HepG2 (cell line): ENCODE measurements at regions of chr16 and their contacts with region 1.

Region 1: DNA sequence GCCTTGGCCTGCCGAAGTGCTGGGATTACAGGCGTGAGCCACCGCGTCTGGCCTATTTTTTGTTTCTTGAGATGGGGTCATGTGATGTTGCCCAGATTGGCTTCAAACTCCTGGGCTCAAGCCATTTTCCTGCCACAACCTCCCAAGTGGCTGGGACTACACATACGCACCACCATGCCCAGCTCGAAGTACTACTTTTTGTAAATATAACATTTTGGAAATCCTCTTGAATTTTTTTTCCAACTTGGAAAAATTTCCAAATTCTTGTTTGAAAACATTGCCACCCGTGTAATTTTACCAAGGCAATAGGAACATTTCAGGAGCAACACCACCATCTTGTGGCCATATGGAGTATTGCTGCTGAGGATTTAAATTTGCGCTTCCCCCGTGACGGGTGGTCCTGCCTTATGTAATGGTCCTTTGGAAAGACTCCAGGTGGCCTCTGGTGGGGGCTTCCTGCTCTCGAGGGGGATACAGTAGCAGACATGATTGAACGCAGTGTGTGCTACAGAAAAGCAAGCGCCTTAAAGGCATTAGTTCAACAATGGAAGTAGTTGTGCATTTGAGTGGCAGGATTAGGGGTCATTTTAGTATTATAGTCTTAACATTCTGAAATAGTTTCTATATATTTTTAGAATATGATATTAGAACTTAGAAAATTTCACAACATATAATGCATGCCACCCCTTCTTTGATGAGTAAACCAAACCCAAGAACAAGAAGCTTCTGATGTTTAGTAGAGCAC is 8.0 kb downstream of the FLYWCH1 start:
- DNase-seq: peak; percentile 55
- ATAC-seq: no peak
- H3K4me3 ChIP-seq: no peak overlapping the region
- H3K27ac ChIP-seq: no peak overlapping the region
- H3K4me1 ChIP-seq: no peaks in the 10 kb centered on the region
- H3K27me3 ChIP-seq: no peaks in the 10 kb centered on the region
- CTCF ChIP-seq: peak; percentile 79
- EP300 ChIP-seq: no peak
- POLR2A ChIP-seq: no peak
- RAD21 ChIP-seq: peak; percentile 78

Region 2: DNA sequence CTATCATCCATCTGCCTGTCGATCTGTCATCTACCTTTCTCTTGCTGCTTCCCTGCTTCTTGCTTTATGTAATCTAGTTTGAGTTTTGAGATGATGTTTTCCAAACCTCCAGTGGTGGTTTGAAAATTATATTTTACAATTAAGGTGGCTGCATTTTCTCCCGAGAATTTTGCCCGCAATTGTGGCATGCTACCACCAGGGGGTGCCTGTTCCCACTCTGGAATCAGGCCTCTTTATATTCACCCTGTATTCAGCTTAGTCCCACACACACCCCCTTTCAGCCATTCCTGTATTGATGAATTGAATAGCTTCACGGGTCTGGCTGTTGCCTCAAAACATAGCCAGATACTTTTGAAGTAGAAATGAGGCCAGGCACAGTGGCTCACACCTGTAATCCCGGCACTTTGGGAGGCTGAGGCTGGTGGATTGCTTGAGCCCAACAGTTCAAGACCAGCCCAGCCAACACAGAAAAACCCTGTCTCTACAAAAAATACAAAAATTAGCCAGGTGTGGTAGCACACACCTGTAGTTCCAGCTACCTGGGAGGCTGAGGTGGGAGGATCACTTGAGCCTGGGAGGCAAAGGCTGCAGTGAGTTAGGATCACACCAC is 64.9 kb before region 1 on chr16:
- CTCF ChIA-PET with region 1: interaction called, 11 read pairs
- POLR2A ChIA-PET with region 1: no interaction called
- in situ Hi-C with region 1: no loop called
- intact Hi-C with region 1: no loop called
- DNase-seq: no peak
- ATAC-seq: no peak
- H3K4me3 ChIP-seq: no peak overlapping the region
- H3K27ac ChIP-seq: no peak overlapping the region
- H3K4me1 ChIP-seq: peaks cover 16% of the 10 kb centered on the region
- H3K27me3 ChIP-seq: peaks cover 2 to 7% of the 10 kb centered on the region in 2 experiments; a peak in 3 of 5 replicates
- CTCF ChIP-seq: peak; percentile 64
- EP300 ChIP-seq: no peak
- POLR2A ChIP-seq: no peak
- RAD21 ChIP-seq: no peak